Adrenal gland (tissue), 19 donors: ENCODE measurements at regions of chr2 and their contacts with region 1.

Region 1: DNA sequence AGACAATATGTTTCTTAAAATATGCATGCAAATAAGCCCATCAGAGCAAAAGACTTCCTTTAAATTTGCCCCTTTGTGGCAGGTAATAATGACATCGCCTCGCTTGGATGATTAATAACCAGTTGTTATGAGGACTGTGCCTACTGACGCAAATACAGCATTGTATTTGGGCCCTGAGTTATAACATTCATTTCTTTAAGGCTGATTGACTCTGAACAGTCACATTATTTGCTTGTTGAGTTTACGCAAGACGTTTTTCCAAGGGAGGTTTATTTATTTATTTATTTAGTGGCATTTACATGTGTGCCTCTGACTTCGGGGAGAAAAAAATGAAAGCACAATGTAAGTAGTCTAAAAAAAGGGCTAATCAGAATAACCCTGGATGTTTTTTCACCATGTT is 88.3 kb downstream of the SLC8A1 start:
- DNase-seq: no peak
- H3K4me3 ChIP-seq: peak overlapping the region in 1 of 4 donors; percentile 46
- H3K27ac ChIP-seq: peak overlapping the region in 3 of 5 donors; percentile 5 to 42 (median 36)
- H3K4me1 ChIP-seq: peaks cover 13 to 27% of the 10 kb centered on the region in 2 donors
- H3K27me3 ChIP-seq: no peaks in the 10 kb centered on the region
- CTCF ChIP-seq: no peak
- POLR2A ChIP-seq: no peak

Region 2: GRCh38 chr2:40244675-40245074 is 119.0 kb before region 1 on chr2:
- intact Hi-C with region 1: loop called in 1 of 2 experiments (anchors 10 kb)
- DNase-seq: peak; percentile 58 to 82 (median 73)
- H3K4me3 ChIP-seq: no peak overlapping the region
- H3K27ac ChIP-seq: no peak overlapping the region
- H3K4me1 ChIP-seq: peaks cover 0 to 11% of the 10 kb centered on the region in 2 donors
- H3K27me3 ChIP-seq: no peaks in the 10 kb centered on the region
- CTCF ChIP-seq: peak; percentile 37 to 68 (median 58)
- POLR2A ChIP-seq: no peak